Adrenal gland (tissue), 19 donors: ENCODE measurements at regions of chr13 and their contacts with region 1.

Region 1: DNA sequence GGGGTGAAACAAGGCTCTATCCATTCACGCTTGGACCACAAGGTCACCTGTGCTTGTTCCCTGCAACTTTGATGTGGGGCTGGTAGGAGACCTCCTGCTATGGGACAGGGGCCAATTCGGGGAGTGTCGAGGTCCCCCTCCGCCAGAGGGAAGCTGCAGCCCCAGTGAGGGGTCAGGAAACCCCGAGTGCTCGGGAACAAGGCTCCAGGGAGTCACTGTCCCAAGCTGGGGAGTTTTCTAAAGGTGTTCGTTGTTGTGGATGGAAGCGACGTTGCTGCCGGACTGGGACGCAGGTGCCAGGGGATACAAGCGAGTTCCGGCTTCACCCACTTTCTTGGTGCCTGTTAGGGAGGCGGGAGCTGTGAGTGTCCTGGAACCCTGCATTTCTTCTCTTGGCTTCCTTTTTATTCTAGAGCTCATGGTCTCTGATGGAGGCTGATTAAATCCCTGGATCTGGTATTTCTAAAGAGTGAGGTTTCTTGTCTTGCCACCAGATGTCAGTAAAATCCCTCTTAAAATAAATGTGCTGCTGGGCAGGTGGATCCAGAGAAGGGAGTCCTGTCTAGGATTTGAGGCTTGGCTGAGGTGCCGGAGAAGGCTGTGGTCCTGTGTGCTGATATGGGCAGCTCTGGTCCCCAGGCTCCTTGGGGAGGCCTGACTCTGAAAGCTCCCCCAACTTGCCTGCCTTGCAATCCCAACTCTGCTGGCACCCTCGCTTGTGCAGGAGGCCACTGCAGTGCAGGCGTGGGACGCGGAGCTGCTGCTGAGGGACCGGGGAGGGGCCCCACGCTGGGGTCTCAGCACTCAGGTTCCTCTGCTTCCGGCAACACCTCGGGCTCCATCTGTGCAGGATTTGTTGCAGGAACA is 153.9 kb downstream of the TEX29 start:
- DNase-seq: peak in 2 of 7 donors; percentile 22 to 48
- H3K4me3 ChIP-seq: no peak overlapping the region
- H3K27ac ChIP-seq: no peak overlapping the region
- H3K4me1 ChIP-seq: no peaks in the 10 kb centered on the region
- H3K27me3 ChIP-seq: peaks cover 4% of the 10 kb centered on the region
- CTCF ChIP-seq: peak; percentile 32 to 67 (median 53)
- POLR2A ChIP-seq: no peak

Region 2: GRCh38 chr13:110444226-110444653 is 1030.1 kb before region 1 on chr13:
- intact Hi-C with region 1: no loop called
- DNase-seq: peak in 5 of 7 donors; percentile 36 to 65 (median 55)
- H3K4me3 ChIP-seq: no peak overlapping the region
- H3K27ac ChIP-seq: peak overlapping the region in 3 of 5 donors; percentile 15 to 68 (median 50)
- H3K4me1 ChIP-seq: peaks cover 5 to 13% of the 10 kb centered on the region in 2 donors
- H3K27me3 ChIP-seq: no peaks in the 10 kb centered on the region
- CTCF ChIP-seq: peak in 5 of 6 experiments; percentile 38 to 55 (median 44)
- POLR2A ChIP-seq: no peak

Region 3: GRCh38 chr13:111281751-111282311 is 192.5 kb before region 1 on chr13:
- intact Hi-C with region 1: no loop called
- DNase-seq: peak in 2 of 7 donors; percentile 15 to 51
- H3K4me3 ChIP-seq: no peak overlapping the region
- H3K27ac ChIP-seq: peak overlapping the region in 2 of 5 donors; percentile 37 to 56
- H3K4me1 ChIP-seq: peaks cover 4 to 11% of the 10 kb centered on the region in 2 donors
- H3K27me3 ChIP-seq: no peaks in the 10 kb centered on the region
- CTCF ChIP-seq: no peak
- POLR2A ChIP-seq: no peak

Region 4: DNA sequence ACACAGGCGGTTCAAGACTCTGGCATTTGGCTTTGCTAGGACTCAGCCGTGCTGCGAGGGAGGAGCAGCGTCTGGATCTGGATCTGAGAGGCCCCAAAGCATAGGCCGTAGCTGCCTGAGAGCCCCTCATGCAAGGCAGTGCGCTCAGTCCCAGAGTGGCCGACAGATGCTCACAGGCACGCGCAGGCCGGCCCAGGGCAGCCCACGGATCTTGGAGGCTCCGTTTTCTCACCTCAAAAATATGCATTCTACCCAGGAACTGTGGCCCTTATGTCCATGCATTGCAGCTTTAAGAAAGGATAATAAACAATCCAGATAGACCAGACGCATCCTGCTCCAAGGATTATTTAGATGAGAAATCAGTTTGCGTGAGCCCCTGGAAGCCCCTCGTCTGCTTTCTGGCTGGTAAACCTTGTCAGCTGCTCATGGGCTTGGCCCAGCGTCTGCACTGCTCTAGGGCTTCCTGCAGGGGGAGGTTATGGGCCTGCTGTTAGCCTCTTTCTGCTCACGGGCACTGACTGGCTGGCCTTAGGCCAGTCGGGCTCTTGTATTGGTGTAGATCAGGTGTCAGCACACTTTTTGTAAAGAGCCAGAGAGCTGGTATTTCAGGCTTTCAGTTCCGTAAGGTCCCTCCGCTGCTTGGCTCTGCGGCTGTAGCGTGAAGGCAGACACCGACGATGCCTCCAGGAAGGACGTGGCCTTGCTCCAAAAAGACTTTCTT is 129.7 kb before region 1 on chr13:
- intact Hi-C with region 1: no loop called
- DNase-seq: peak in 1 of 7 donors; percentile 5
- H3K4me3 ChIP-seq: no peak overlapping the region
- H3K27ac ChIP-seq: no peak overlapping the region
- H3K4me1 ChIP-seq: no peaks in the 10 kb centered on the region
- H3K27me3 ChIP-seq: no peaks in the 10 kb centered on the region
- CTCF ChIP-seq: no peak
- POLR2A ChIP-seq: no peak

Region 5: GRCh38 chr13:112443995-112444860 is 969.9 kb after region 1 on chr13:
- intact Hi-C with region 1: loop called (anchors 2 to 10 kb)
- DNase-seq: peak; percentile 31 to 79 (median 68)
- H3K4me3 ChIP-seq: no peak overlapping the region
- H3K27ac ChIP-seq: no peak overlapping the region
- H3K4me1 ChIP-seq: no peaks in the 10 kb centered on the region
- H3K27me3 ChIP-seq: peaks cover 30% of the 10 kb centered on the region
- CTCF ChIP-seq: peak; percentile 63 to 87 (median 78)
- POLR2A ChIP-seq: no peak

Region 6: GRCh38 chr13:112606109-112607001 is 1132.0 kb after region 1 on chr13:
- intact Hi-C with region 1: loop called in 1 of 2 experiments (anchors 5 kb)
- DNase-seq: peak; percentile 90 to 95 (median 93)
- H3K4me3 ChIP-seq: peak overlapping the region in 1 of 4 donors; percentile 51
- H3K27ac ChIP-seq: peak overlapping the region in 4 of 5 donors; percentile 36 to 77 (median 44)
- H3K4me1 ChIP-seq: no peaks in the 10 kb centered on the region
- H3K27me3 ChIP-seq: peaks cover 2% of the 10 kb centered on the region
- CTCF ChIP-seq: peak; percentile 87 to 97 (median 92)
- POLR2A ChIP-seq: peak in 1 of 2 donors; percentile 44